Activated T-helper 2 cell treated with anti-CD3 and anti-CD28 coated beads, Interferon-gamma antibody, Interleukin-2, Interleukin-4, amounts not matched to agents 10 μg/mL and 5 μg/mL and 100 μg/mL, durations not matched to agents 14 hours and 24 hours and 36 hours (primary cell): ENCODE measurements at regions of chr20 and their contacts with region 1.

Region 1: DNA sequence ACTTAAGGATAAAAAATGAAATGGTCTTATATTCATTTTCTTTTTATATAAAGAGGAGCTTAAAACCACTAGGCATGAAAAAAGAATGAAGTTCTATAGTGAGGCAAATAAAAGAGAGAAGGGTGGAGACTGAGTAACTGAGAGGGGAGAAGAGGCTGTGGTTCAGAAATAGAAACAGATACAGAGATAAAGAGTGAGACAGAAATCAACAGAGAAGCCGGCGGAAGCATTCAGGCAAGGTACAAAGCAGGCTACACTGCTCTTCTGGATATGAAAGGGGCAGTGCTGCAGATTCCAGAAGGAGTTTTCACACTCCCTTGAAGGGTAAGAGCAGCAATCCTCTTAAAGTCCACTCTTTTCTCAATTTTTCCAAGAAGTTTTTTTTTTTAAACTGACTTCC is 29.9 kb downstream of the NFATC2 start:
- DNase-seq: peak; percentile 28
- H3K4me3 Mint-ChIP-seq: no peak overlapping the region
- H3K27ac Mint-ChIP-seq: peak overlapping the region; percentile 82
- H3K4me1 Mint-ChIP-seq: peaks cover 70% of the 10 kb centered on the region
- H3K27me3 Mint-ChIP-seq: no peaks in the 10 kb centered on the region

Region 2: DNA sequence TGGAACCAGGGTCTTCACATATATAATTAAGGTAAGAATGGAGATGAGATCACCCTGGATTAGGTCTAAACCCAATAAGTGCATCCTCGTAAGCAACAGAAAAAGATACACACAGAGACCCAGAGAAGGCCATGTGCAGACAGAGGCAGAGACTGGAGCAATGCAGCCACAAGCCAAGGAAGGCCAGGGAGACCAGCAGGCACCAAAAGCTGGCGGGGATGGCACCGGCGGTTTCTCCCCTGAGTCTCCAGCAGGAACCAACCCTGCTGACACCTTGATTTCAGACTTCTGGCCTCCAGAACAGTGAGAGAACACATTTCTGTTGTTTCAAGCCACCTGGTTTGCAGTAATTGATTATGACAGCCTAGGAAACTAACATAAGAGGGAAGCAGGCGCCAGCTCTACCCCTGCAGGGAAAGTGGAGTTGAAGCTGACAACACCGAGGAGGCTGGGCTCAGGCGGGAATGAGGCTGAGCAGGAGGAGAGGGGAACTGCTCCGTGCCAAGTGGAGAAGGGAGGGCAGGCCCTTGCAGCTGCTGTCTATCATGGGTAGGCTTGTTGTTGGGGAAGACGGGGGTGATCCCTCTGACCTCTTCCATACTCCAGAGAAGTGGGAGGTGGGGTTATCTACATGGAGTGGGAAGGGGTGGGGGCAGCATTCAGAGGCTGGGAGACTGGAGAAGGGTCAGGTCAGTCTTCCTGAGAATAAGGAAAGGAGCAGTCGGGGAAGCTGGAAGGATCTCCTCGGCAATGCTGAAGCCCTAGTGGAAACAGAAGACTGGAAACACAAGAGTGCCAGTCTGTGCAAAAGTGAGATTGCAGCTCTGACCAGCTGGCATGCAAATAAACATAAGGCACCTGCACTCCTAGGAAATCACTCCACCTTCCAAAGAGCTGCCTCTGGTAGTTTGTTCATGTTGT is 42.8 kb before region 1 on chr20:
- intact Hi-C with region 1: loop called (anchors 5 kb)
- DNase-seq: no peak
- H3K4me3 Mint-ChIP-seq: peak overlapping the region; percentile 18
- H3K27ac Mint-ChIP-seq: peak overlapping the region; percentile 77
- H3K4me1 Mint-ChIP-seq: peaks cover 43% of the 10 kb centered on the region
- H3K27me3 Mint-ChIP-seq: no peaks in the 10 kb centered on the region

Region 3: GRCh38 chr20:51500311-51500710 is 12.3 kb before region 1 on chr20:
- intact Hi-C with region 1: loop called (anchors 1 kb)
- DNase-seq: peak; percentile 46
- H3K4me3 Mint-ChIP-seq: no peak overlapping the region
- H3K27ac Mint-ChIP-seq: peak overlapping the region; percentile 79
- H3K4me1 Mint-ChIP-seq: peaks cover 74% of the 10 kb centered on the region
- H3K27me3 Mint-ChIP-seq: no peaks in the 10 kb centered on the region

Region 4: GRCh38 chr20:51531141-51531710 is 18.6 kb after region 1 on chr20:
- intact Hi-C with region 1: loop called (anchors 1 kb)
- DNase-seq: peak; percentile 44
- H3K4me3 Mint-ChIP-seq: peak overlapping the region; percentile 82
- H3K27ac Mint-ChIP-seq: peak overlapping the region; percentile 99
- H3K4me1 Mint-ChIP-seq: peaks cover 84% of the 10 kb centered on the region
- H3K27me3 Mint-ChIP-seq: no peaks in the 10 kb centered on the region

Region 5: DNA sequence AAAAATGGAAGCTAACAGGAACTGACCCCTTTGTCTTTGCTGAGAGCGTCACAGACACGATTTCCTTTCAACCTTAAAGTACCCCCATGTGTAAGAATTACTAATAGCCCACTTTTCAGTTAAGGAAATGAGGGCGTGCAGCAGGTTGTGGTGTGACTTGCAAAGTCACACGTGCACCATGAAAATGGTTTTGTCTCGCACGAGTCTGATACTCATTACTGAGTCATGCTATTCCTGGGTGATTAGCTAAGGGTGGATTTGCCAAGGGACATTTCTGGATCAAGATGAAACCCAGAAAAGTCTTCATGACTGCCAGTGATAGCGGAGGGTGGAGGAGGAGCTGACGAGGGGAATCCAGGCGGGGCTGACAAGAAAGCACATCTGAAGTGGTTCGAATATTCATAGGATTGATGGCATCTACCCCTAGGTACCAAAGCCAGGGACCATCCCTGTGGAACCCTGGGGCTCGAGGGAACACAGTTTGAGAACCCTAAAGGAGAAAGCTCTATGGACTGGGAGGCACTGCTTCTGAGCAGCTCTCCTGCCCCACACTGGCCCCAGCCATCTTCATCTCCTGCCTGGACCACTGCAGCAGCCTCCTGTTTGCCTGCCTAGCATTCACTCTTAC is 42.0 kb after region 1 on chr20:
- intact Hi-C with region 1: no loop called
- DNase-seq: no peak
- H3K4me3 Mint-ChIP-seq: no peak overlapping the region
- H3K27ac Mint-ChIP-seq: no peak overlapping the region
- H3K4me1 Mint-ChIP-seq: peaks cover 2% of the 10 kb centered on the region
- H3K27me3 Mint-ChIP-seq: peaks cover 21% of the 10 kb centered on the region